Dorsolateral prefrontal cortex (tissue), 120 donors: ENCODE measurements at regions of chr9 and their contacts with region 1.

Region 1: GRCh38 chr9:105216440-105217178 is 27.8 kb upstream of the SLC44A1 start:
- DNase-seq: peak; percentile 45 to 78 (median 64)
- H3K4me3 ChIP-seq: peak overlapping the region in 4 of 59 donors; percentile 13 to 22 (median 21)
- H3K27ac ChIP-seq: peak overlapping the region in 54 of 59 donors; percentile 1 to 90 (median 74)
- H3K27me3 ChIP-seq: no peaks in the 10 kb centered on the region
- CTCF ChIP-seq: no peak

Region 2: GRCh38 chr9:105168870-105169319 is 47.7 kb before region 1 on chr9:
- intact Hi-C with region 1: loop called in 1 of 2 experiments (anchors 5 kb)
- DNase-seq: no peak
- H3K4me3 ChIP-seq: no peak overlapping the region
- H3K27ac ChIP-seq: no peak overlapping the region
- H3K27me3 ChIP-seq: no peaks in the 10 kb centered on the region
- CTCF ChIP-seq: no peak